HepG2 (cell line): ENCODE measurements at regions of chr12 and their contacts with region 1.

Region 1: GRCh38 chr12:106919910-106920544 is 35.7 kb upstream of the TMEM263 start:
- DNase-seq: peak; percentile 28
- ATAC-seq: no peak
- H3K4me3 ChIP-seq: no peak overlapping the region
- H3K27ac ChIP-seq: no peak overlapping the region
- H3K4me1 ChIP-seq: no peaks in the 10 kb centered on the region
- H3K27me3 ChIP-seq: no peaks in the 10 kb centered on the region; a peak in 1 of 5 replicates
- CTCF ChIP-seq: peak; percentile 71
- EP300 ChIP-seq: no peak
- POLR2A ChIP-seq: no peak
- RAD21 ChIP-seq: peak; percentile 48

Region 2: GRCh38 chr12:106223485-106224354 is 696.3 kb before region 1 on chr12:
- CTCF ChIA-PET with region 1: no interaction called
- POLR2A ChIA-PET with region 1: no interaction called
- in situ Hi-C with region 1: no loop called
- intact Hi-C with region 1: loop called (anchors 5 kb)
- DNase-seq: peak; percentile 45
- ATAC-seq: peak; percentile 90
- H3K4me3 ChIP-seq: no peak overlapping the region
- H3K27ac ChIP-seq: no peak overlapping the region
- H3K4me1 ChIP-seq: peaks cover 11% of the 10 kb centered on the region
- H3K27me3 ChIP-seq: peaks cover 0 to 4% of the 10 kb centered on the region in 2 experiments; a peak in 1 of 5 replicates
- CTCF ChIP-seq: peak; percentile 93
- EP300 ChIP-seq: no peak
- POLR2A ChIP-seq: no peak
- RAD21 ChIP-seq: peak; percentile 84

Region 3: GRCh38 chr12:106357549-106358395 is 562.3 kb before region 1 on chr12 and contains the start of gene POLR3B:
- CTCF ChIA-PET with region 1: interaction called, 3 read pairs
- POLR2A ChIA-PET with region 1: interaction called, 13 read pairs
- in situ Hi-C with region 1: no loop called
- intact Hi-C with region 1: no loop called
- DNase-seq: peak; percentile 84
- ATAC-seq: peak; percentile 89
- H3K4me3 ChIP-seq: peak within 1 kb of the TSS; percentile 64 to 78 (median 65)
- H3K27ac ChIP-seq: peak within 1 kb of the TSS; percentile 91
- H3K4me1 ChIP-seq: peaks cover 40% of the 10 kb centered on the region
- H3K27me3 ChIP-seq: no peaks in the 10 kb centered on the region; a peak in 1 of 5 replicates
- CTCF ChIP-seq: peak; percentile 96
- EP300 ChIP-seq: peak; percentile 23 to 30; a peak in 3 of 4 replicates
- POLR2A ChIP-seq: peak; percentile 87 to 89
- RAD21 ChIP-seq: peak; percentile 86
- total RNA-seq, gene POLR3B: 13.1 and 22.9 TPM in 2 replicates

Region 4: GRCh38 chr12:106386813-106387535 is 533.1 kb before region 1 on chr12:
- CTCF ChIA-PET with region 1: interaction called, 31 read pairs
- POLR2A ChIA-PET with region 1: no interaction called
- in situ Hi-C with region 1: loop called (anchors 5 kb)
- intact Hi-C with region 1: loop called (anchors 1 kb)
- DNase-seq: no peak
- ATAC-seq: no peak
- H3K4me3 ChIP-seq: no peak overlapping the region
- H3K27ac ChIP-seq: no peak overlapping the region
- H3K4me1 ChIP-seq: no peaks in the 10 kb centered on the region
- H3K27me3 ChIP-seq: no peaks in the 10 kb centered on the region
- CTCF ChIP-seq: no peak
- EP300 ChIP-seq: no peak
- POLR2A ChIP-seq: no peak
- RAD21 ChIP-seq: no peak

Region 5: GRCh38 chr12:106519607-106520021 is 400.4 kb before region 1 on chr12:
- CTCF ChIA-PET with region 1: no interaction called
- POLR2A ChIA-PET with region 1: no interaction called
- in situ Hi-C with region 1: no loop called
- intact Hi-C with region 1: loop called (anchors 5 kb)
- DNase-seq: no peak
- ATAC-seq: no peak
- H3K4me3 ChIP-seq: no peak overlapping the region
- H3K27ac ChIP-seq: no peak overlapping the region
- H3K4me1 ChIP-seq: peaks cover 12% of the 10 kb centered on the region
- H3K27me3 ChIP-seq: 0 out of 5 replicates have a peak, but pooled peaks cover 0 to 4% of the 10 kb centered on the region in 2 experiments
- CTCF ChIP-seq: no peak
- EP300 ChIP-seq: no peak
- POLR2A ChIP-seq: no peak
- RAD21 ChIP-seq: no peak

Region 6: GRCh38 chr12:106682592-106683234 is 237.3 kb before region 1 on chr12:
- CTCF ChIA-PET with region 1: interaction called, 4 read pairs
- POLR2A ChIA-PET with region 1: no interaction called
- in situ Hi-C with region 1: no loop called
- intact Hi-C with region 1: loop called (anchors 5 kb)
- DNase-seq: peak; percentile 8
- ATAC-seq: peak; percentile 57
- H3K4me3 ChIP-seq: no peak overlapping the region
- H3K27ac ChIP-seq: no peak overlapping the region
- H3K4me1 ChIP-seq: peaks cover 6% of the 10 kb centered on the region; the same call in 1 of the 2 replicates
- H3K27me3 ChIP-seq: no peaks in the 10 kb centered on the region
- CTCF ChIP-seq: peak; percentile 31
- EP300 ChIP-seq: no peak
- POLR2A ChIP-seq: no peak
- RAD21 ChIP-seq: no peak

Region 7: GRCh38 chr12:106841510-106842302 is 78.3 kb before region 1 on chr12:
- CTCF ChIA-PET with region 1: interaction called, 4 read pairs
- POLR2A ChIA-PET with region 1: no interaction called
- in situ Hi-C with region 1: no loop called
- intact Hi-C with region 1: loop called (anchors 2 kb)
- DNase-seq: peak; percentile 30
- ATAC-seq: peak; percentile 71
- H3K4me3 ChIP-seq: no peak overlapping the region
- H3K27ac ChIP-seq: peak overlapping the region; percentile 9
- H3K4me1 ChIP-seq: peaks cover 26% of the 10 kb centered on the region
- H3K27me3 ChIP-seq: no peaks in the 10 kb centered on the region
- CTCF ChIP-seq: peak; percentile 68
- EP300 ChIP-seq: no peak
- POLR2A ChIP-seq: no peak
- RAD21 ChIP-seq: peak; percentile 36; the same call in 1 of the 2 replicates

Region 8: DNA sequence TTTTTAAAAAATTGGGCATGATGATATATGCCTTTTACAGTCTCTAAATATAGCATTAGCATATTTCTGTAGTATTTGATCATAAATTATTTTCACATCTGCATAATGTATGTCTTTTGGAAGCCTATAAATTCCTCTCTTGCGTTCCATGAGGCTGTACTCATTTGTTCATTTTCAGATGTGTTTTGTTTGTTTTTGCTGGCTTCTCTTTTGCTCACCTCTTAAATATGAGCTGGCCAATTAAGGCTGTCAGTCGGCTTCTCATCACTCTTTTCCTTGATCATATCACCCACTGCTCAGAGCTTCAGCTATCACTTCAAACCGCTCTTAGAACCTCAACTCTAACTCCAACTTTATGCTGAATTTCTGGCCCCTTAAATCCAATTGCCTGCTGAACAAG is 42.3 kb after region 1 on chr12:
- CTCF ChIA-PET with region 1: no interaction called
- POLR2A ChIA-PET with region 1: no interaction called
- in situ Hi-C with region 1: no loop called
- intact Hi-C with region 1: no loop called
- DNase-seq: no peak
- ATAC-seq: no peak
- H3K4me3 ChIP-seq: no peak overlapping the region
- H3K27ac ChIP-seq: no peak overlapping the region
- H3K4me1 ChIP-seq: peaks cover 64% of the 10 kb centered on the region
- H3K27me3 ChIP-seq: no peaks in the 10 kb centered on the region
- CTCF ChIP-seq: no peak
- EP300 ChIP-seq: no peak
- POLR2A ChIP-seq: no peak
- RAD21 ChIP-seq: no peak